ENCODE measurements at regions of chr1 and their contacts with region 1.

Region 1: GRCh38 chr1:46352363-46352762 is 11.8 kb downstream of the NSUN4 start:
- DNase-seq: no peak

Region 2: DNA sequence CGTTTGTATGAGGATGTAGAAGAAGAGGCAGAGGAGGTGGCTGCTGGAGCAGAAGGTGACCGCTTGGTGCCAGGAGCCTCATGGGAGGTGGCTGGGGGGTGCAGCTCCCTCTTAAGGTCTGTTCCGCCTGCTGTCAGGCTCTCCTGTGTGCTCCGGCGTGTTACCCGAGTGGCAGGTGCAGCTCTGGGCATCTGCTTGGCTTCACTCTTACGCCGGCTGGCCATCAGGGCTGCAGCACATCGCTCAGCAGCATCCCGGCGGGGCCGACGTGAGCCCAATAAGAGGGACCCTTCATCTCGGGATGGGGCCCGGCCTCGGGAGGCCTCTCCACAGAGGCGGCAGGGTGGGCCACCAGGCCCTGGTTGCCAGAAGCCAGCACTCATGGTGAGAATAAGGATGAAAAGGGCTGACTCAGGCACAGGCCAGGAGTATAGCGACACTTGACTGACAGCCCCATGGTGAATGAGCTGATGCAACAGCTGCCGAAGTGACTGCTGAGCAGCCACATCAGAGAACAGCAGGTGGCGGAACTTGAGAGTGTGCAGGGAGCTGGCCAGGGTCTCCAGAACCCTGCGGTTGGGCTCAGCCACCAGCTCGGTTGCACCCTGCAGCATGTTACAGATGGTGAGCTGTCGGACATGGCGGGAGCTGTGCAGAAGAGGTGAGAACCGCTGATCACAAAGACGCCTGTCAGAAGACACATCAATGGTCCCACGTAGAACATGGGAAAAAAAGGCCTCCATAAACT is 66.5 kb before region 1 on chr1:
- intact Hi-C with region 1: no loop called
- DNase-seq: no peak

Region 3: DNA sequence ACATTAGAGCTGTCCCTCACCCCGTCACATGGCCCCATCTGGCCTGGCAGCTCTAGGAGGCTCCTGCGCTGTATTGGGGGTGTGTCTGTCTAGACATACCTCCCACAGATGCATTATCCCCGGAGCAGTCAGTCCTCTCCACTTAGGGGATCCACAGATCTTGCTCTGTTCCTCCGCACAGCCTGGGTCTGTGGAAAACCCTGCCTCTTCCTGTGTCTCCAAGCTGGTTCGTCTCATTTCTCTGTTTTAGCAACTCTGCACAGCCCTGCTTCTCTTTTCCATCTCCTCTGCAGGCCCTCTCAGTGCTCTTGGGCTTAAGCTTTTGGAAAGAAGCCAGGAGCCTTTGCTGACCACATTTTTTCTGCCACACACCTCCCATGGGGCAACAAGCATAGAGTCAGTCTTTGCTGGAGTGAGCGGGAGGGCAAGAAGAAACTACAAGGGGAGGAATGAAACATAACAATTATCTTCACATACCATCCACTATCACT is 1327.0 kb after region 1 on chr1:
- intact Hi-C with region 1: loop called in 1 of 2 experiments (anchors 5 kb)
- DNase-seq: no peak

Measured in posterior vena cava (tissue), 2 donors.